Activated CD4-positive, alpha-beta memory T cell treated with anti-CD3 and anti-CD28 coated beads, Interleukin-2, amount 10 ng/mL, durations not matched to agents 7 days and 5 days (primary cell): ENCODE measurements at regions of chr6 and their contacts with region 1.

Region 1: DNA sequence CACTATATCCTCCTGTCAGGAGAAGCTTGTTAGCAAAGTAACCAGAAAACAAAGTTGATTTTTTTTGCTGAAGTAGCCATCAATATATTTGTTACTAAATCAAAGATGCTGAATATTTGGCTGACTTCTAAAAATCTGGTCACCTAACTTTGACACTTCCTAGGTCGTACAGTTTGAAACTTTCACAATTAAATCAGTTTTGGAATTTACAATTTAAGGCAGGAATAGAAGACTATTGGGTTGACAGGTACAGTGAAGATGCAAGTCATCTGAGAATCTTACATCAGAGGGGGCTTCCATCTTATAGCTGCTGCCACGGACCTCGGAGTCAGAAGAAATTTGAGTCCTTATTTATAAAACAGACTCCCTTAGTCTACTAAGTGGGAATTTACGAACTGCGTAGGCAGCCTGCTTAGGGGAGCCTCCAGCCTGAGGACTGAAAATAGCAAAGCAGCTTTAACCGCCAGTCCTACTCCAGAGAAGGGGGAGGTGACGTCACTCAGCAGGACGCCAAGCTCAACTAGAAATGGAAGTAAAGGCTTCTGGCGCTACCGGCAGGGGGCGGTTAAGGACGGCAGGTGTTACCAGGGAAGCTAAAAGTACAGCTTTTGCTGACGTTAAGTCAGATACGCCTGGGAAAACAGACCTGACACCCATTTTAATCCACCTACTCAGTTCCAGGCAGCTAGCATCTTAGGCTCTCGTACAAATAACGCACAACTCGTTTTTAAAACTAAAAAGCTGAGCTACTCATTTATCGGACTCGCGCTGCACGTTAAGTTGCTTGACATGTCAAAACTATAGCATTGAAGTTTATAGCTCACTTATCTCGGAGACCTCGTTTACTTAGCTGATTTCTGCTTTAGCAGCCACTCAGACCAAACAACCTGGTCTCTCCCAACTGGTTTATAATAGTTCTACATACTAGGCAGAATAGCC is 61.1 kb upstream of the HFE start:
- DNase-seq: peak; percentile 94
- H3K4me3 Mint-ChIP-seq: peak overlapping the region; percentile 75
- H3K27ac Mint-ChIP-seq: peak overlapping the region; percentile 100
- H3K4me1 Mint-ChIP-seq: peaks cover 84% of the 10 kb centered on the region
- H3K27me3 Mint-ChIP-seq: peaks cover 2% of the 10 kb centered on the region

Region 2: GRCh38 chr6:25842526-25843277 is 183.5 kb before region 1 on chr6:
- CTCF ChIA-PET with region 1: no interaction called
- POLR2A ChIA-PET with region 1: no interaction called
- DNase-seq: no peak
- H3K4me3 Mint-ChIP-seq: no peak overlapping the region
- H3K27ac Mint-ChIP-seq: no peak overlapping the region
- H3K4me1 Mint-ChIP-seq: peaks cover 2% of the 10 kb centered on the region
- H3K27me3 Mint-ChIP-seq: peaks cover 5% of the 10 kb centered on the region

Region 3: GRCh38 chr6:25992413-25993037 is 33.6 kb before region 1 on chr6:
- CTCF ChIA-PET with region 1: interaction called, 18 read pairs
- POLR2A ChIA-PET with region 1: interaction called, 56 read pairs
- DNase-seq: peak; percentile 94
- H3K4me3 Mint-ChIP-seq: peak overlapping the region; percentile 97
- H3K27ac Mint-ChIP-seq: peak overlapping the region; percentile 78
- H3K4me1 Mint-ChIP-seq: peaks cover 30% of the 10 kb centered on the region
- H3K27me3 Mint-ChIP-seq: no peaks in the 10 kb centered on the region

Region 4: DNA sequence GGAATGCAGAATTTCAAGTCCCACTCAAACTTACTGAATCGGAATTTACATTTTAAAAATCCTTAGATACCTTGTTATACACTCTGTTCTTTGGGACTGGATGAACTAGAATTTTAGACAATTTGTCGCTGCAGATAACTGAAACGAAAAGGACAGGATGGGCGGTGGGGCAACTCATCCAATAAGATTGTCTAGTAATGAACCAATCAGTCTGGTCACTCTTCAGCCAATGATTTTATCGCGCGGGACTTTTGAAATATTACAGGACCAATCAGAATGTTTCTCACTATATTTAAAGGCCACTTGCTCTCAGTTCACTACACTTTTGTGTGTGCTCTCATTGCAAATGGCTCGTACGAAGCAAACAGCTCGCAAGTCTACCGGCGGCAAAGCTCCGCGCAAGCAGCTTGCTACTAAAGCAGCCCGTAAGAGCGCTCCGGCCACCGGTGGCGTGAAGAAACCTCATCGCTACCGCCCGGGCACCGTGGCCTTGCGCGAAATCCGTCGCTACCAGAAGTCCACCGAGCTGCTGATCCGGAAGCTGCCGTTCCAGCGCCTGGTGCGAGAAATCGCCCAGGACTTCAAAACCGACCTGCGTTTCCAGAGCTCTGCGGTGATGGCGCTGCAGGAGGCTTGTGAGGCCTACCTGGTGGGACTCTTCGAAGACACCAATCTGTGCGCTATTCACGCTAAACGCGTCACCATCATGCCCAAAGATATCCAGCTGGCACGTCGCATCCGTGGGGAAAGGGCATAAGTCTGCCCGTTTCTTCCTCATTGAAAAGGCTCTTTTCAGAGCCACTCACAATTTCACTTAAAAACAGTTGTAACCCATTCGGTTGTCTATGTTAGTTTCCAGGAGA is 19.1 kb after region 1 on chr6:
- CTCF ChIA-PET with region 1: interaction called, 72 read pairs
- POLR2A ChIA-PET with region 1: interaction called, 2,531 read pairs
- DNase-seq: peak; percentile 82
- H3K4me3 Mint-ChIP-seq: peak overlapping the region; percentile 79
- H3K27ac Mint-ChIP-seq: peak overlapping the region; percentile 99
- H3K4me1 Mint-ChIP-seq: peaks cover 44% of the 10 kb centered on the region
- H3K27me3 Mint-ChIP-seq: no peaks in the 10 kb centered on the region

Region 5: DNA sequence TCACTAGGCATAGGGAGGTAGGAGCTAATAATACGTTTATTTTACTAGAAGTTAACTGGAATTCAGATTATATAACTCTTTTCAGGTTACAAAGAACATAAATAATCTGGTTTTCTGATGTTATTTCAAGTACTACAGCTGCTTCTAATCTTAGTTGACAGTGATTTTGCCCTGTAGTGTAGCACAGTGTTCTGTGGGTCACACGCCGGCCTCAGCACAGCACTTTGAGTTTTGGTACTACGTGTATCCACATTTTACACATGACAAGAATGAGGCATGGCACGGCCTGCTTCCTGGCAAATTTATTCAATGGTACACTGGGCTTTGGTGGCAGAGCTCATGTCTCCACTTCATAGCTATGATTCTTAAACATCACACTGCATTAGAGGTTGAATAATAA is 62.2 kb after region 1 on chr6:
- CTCF ChIA-PET with region 1: no interaction called
- POLR2A ChIA-PET with region 1: no interaction called
- DNase-seq: no peak
- H3K4me3 Mint-ChIP-seq: peak overlapping the region; percentile 77
- H3K27ac Mint-ChIP-seq: no peak overlapping the region
- H3K4me1 Mint-ChIP-seq: peaks cover 42% of the 10 kb centered on the region
- H3K27me3 Mint-ChIP-seq: peaks cover 3% of the 10 kb centered on the region

Region 6: GRCh38 chr6:26183581-26184366 is 157.6 kb after region 1 on chr6:
- CTCF ChIA-PET with region 1: no interaction called
- POLR2A ChIA-PET with region 1: interaction called, 32 read pairs
- DNase-seq: peak; percentile 78
- H3K4me3 Mint-ChIP-seq: peak overlapping the region; percentile 75
- H3K27ac Mint-ChIP-seq: peak overlapping the region; percentile 92
- H3K4me1 Mint-ChIP-seq: peaks cover 71% of the 10 kb centered on the region
- H3K27me3 Mint-ChIP-seq: no peaks in the 10 kb centered on the region

Region 7: DNA sequence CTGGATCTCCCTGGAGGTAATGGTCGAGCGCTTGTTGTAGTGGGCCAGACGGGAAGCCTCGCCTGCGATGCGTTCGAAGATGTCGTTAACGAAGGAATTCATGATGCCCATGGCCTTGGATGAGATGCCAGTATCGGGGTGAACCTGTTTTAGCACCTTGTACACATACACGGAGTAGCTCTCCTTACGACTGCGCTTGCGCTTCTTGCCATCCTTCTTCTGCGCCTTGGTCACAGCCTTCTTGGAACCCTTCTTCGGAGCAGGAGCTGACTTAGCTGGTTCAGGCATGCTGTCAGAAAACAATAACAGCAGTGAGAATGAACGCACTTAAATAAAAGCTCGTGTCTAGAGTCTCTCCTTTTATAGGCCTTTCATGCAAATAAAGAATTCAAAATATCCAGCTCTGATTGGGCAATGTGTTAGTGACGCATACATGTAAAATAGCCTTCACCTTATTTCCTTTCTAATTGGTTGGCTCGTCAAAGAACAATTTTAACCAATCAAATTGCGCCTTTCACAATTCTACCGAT is 190.3 kb after region 1 on chr6:
- CTCF ChIA-PET with region 1: interaction called, 3 read pairs
- POLR2A ChIA-PET with region 1: interaction called, 39 read pairs
- DNase-seq: peak; percentile 90
- H3K4me3 Mint-ChIP-seq: no peak overlapping the region
- H3K27ac Mint-ChIP-seq: no peak overlapping the region
- H3K4me1 Mint-ChIP-seq: peaks cover 28% of the 10 kb centered on the region
- H3K27me3 Mint-ChIP-seq: no peaks in the 10 kb centered on the region

Region 8: GRCh38 chr6:27132532-27133280 is 1106.5 kb after region 1 on chr6:
- CTCF ChIA-PET with region 1: interaction called, 3 read pairs
- POLR2A ChIA-PET with region 1: interaction called, 39 read pairs
- DNase-seq: peak; percentile 95
- H3K4me3 Mint-ChIP-seq: no peak overlapping the region
- H3K27ac Mint-ChIP-seq: no peak overlapping the region
- H3K4me1 Mint-ChIP-seq: peaks cover 60% of the 10 kb centered on the region
- H3K27me3 Mint-ChIP-seq: no peaks in the 10 kb centered on the region

Region 9: DNA sequence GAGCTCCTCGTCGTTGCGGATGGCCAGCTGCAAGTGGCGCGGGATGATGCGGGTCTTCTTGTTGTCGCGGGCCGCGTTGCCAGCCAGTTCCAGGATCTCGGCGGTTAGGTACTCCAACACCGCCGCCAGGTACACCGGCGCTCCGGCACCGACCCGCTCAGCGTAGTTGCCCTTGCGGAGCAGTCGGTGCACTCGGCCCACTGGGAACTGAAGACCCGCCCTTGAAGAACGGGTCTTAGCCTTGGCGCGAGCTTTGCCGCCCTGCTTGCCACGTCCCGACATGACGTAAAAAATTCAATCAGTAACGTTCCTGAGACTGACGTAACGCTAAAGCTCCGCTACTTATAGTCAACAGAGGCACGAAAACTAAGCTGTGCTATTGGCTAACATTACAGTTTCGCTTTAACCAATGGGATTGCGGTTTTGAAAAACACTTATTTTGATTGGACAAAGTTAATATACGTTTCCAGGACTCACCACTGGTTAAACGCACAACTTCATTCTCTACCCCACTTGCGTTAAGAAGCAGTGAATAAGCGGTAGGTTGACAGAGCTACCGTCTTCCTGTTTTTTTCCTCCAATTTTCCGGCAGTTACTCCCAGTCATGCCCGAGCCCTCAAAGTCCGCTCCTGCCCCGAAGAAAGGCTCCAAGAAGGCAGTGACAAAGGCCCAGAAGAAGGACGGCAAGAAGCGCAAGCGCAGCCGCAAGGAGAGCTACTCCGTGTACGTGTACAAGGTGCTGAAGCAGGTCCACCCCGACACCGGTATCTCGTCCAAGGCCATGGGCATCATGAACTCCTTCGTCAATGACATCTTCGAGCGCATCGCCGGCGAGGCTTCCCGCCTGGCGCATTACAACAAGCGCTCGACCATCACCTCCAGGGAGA is 1812.1 kb after region 1 on chr6:
- CTCF ChIA-PET with region 1: no interaction called
- POLR2A ChIA-PET with region 1: interaction called, 41 read pairs
- DNase-seq: peak; percentile 90
- H3K4me3 Mint-ChIP-seq: no peak overlapping the region
- H3K27ac Mint-ChIP-seq: no peak overlapping the region
- H3K4me1 Mint-ChIP-seq: peaks cover 31% of the 10 kb centered on the region
- H3K27me3 Mint-ChIP-seq: no peaks in the 10 kb centered on the region